ENCODE measurements at regions of chr18 and their contacts with region 1.

Region 1: GRCh38 chr18:10560450-10561045 is 34.7 kb downstream of the NAPG start:
- DNase-seq: peak; percentile 74
- H3K4me3 ChIP-seq: no peak overlapping the region
- H3K27ac ChIP-seq: no peak overlapping the region
- H3K4me1 ChIP-seq: peaks cover 11% of the 10 kb centered on the region
- CTCF ChIP-seq: peak; percentile 92

Region 2: DNA sequence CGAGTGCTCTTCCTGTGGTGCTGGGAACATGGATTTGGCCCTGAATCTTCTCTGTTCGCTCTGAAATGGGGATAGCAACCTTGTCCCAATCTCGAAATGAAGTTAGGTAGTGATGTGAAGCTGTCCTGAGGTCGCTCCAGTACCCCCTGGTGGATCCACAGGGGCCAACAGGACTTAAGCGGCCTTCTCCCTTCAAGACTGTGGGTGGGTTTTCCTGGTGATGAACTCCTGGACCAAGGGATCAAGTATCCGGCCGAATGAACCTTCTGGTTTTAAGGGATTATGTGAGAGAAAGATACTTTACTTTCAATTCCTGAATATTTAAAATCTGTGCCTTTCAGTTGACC is 121.8 kb after region 1 on chr18:
- CTCF ChIA-PET with region 1: no interaction called
- POLR2A ChIA-PET with region 1: no interaction called
- intact Hi-C with region 1: loop called (anchors 5 kb)
- DNase-seq: peak; percentile 13
- H3K4me3 ChIP-seq: no peak overlapping the region
- H3K27ac ChIP-seq: no peak overlapping the region
- H3K4me1 ChIP-seq: peaks cover 7% of the 10 kb centered on the region
- CTCF ChIP-seq: peak; percentile 54

Region 3: GRCh38 chr18:10750191-10751035 is 189.9 kb after region 1 on chr18:
- CTCF ChIA-PET with region 1: no interaction called
- POLR2A ChIA-PET with region 1: no interaction called
- intact Hi-C with region 1: loop called (anchors 5 kb)
- DNase-seq: no peak
- H3K4me3 ChIP-seq: no peak overlapping the region
- H3K27ac ChIP-seq: no peak overlapping the region
- H3K4me1 ChIP-seq: no peaks in the 10 kb centered on the region
- CTCF ChIP-seq: no peak

Region 4: GRCh38 chr18:10755855-10756254 is 195.3 kb after region 1 on chr18:
- CTCF ChIA-PET with region 1: interaction called, 29 read pairs
- POLR2A ChIA-PET with region 1: no interaction called
- intact Hi-C with region 1: loop called (anchors 5 kb)
- DNase-seq: no peak
- H3K4me3 ChIP-seq: no peak overlapping the region
- H3K27ac ChIP-seq: no peak overlapping the region
- H3K4me1 ChIP-seq: no peaks in the 10 kb centered on the region
- CTCF ChIP-seq: no peak

Region 5: DNA sequence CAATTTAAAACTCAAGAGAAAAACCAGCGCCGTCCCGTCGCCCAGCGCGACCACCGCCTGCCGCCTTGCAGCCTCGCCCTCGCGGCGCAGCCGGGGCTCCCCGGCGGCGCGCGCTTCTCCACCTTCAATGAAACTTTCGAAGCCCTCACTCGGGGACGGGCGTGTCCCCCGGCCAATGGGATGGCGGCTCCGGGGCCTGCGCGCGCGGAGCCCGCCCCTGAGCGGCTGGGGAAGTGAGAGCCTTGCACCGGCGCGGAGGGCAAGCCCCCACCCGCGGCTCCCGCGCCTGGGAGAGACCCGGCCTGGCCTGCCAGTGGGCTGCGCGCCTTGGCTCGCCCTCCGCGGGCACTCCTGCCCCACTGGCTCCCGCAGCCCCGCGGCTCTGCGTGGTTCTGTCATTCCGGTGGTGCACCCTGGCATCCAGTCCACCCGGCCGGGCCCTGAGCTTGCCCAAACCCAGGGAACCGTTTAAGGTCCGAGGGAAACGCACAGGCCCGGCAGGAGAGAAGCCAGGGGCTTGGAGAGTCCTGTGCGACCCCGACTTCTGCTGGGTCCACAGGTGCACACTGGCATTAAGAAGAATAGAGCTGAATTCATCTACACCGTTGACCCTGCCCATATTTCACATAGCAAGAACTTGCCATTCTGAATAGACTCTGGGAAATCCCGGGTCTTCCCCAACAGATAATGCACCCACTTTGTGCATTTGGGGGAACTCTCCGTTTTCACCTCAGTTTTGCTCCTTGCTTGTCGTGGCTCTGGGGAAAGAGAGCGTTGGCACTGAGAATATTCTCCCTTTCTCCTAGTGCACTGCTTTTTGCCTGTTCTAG is 589.1 kb after region 1 on chr18 and contains the start of gene PIEZO2:
- CTCF ChIA-PET with region 1: no interaction called
- POLR2A ChIA-PET with region 1: no interaction called
- intact Hi-C with region 1: loop called (anchors 5 kb)
- DNase-seq: no peak
- H3K4me3 ChIP-seq: no peak within 1 kb of the TSS
- H3K27ac ChIP-seq: no peak within 1 kb of the TSS
- H3K4me1 ChIP-seq: no peaks in the 10 kb centered on the region
- CTCF ChIP-seq: no peak
- total RNA-seq, gene PIEZO2: 0.95 and 2.6 TPM in 2 replicates

Measured in OCI-LY7 (cell line).